Activated CD8-positive, alpha-beta T cell treated with anti-CD3 and anti-CD28 coated beads for 36 hours (primary cell): ENCODE measurements at regions of chr10 and their contacts with region 1.

Region 1: DNA sequence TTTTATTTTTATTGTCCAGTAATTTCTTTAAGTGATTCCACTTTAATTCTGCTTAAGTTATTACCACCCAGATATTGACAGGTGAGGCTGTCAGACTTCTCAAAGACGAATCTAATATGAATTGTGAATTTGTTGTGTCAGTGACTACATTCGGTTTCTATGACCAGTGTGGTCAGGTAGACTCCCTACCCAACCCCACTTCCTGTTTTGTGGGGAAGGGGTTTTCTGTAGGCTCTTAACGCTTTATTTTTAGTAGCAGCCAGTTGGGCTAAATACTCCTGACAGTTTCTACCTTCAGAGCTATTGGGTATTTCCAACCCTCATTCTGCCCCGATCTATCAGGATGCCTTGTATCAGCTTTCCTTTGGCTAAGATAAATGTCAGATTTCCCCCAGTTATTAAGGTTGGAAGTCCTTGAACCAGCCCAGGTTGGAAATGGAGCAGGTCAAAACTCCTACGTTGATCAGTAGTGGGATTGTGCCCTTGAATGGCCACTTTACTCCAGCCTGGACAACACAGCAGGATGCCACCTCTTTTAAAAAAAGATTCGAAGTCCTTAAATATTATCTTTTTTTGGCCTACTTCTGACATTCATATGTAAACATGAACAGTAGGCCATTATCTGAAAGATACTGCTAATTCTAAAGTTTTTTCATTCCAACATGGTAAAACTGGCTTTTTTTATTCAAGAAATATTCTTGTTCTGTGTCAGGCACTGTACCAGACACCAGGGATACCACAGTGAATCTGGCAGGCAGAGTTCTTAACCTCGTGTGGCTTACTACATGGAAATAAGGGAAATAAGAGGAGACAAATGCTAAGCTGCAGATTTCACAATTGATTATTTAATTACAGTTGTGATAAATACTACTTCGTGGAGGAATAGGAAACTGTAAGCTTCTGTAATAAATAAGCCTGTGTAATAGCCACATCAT is 133.3 kb upstream of the SAMD8 start:
- DNase-seq: peak; percentile 81
- ATAC-seq: peak; percentile 90
- H3K4me3 Mint-ChIP-seq: peak overlapping the region; percentile 43
- H3K27ac Mint-ChIP-seq: peak overlapping the region; percentile 79
- H3K4me1 Mint-ChIP-seq: peaks cover 56% of the 10 kb centered on the region
- H3K27me3 Mint-ChIP-seq: no peaks in the 10 kb centered on the region
- CTCF ChIP-seq: no peak

Region 2: DNA sequence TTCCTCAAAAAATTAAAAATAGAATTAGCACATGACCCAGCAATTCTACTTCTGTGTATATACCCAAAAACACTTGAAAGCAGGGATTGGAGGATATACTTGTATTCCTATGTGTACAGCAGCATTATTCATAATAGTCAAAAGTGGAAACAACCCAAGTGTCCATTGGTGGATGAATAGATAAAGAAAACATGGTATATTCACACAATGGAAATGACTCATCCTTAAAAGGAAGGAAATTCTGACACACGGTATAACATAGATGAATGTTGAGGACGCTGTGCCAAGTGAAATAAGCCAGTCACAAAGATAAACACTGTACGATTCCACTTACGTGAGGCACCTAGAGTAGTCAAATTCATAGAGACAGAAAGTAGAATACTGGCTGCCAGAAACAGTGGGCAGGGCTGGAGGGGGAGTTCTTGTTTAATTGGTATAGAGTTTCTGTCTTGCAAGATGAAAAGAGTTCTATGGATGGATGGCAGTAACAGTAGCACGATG is 178.4 kb before region 1 on chr10:
- CTCF ChIA-PET with region 1: no interaction called
- POLR2A ChIA-PET with region 1: no interaction called
- intact Hi-C with region 1: no loop called
- DNase-seq: peak; percentile 57
- ATAC-seq: peak; percentile 92
- H3K4me3 Mint-ChIP-seq: no peak overlapping the region
- H3K27ac Mint-ChIP-seq: peak overlapping the region; percentile 32
- H3K4me1 Mint-ChIP-seq: peaks cover 12% of the 10 kb centered on the region
- H3K27me3 Mint-ChIP-seq: no peaks in the 10 kb centered on the region
- CTCF ChIP-seq: no peak

Region 3: GRCh38 chr10:74826142-74827044 is 151.8 kb before region 1 on chr10 and contains the start of gene KAT6B:
- CTCF ChIA-PET with region 1: no interaction called
- POLR2A ChIA-PET with region 1: interaction called, 3 read pairs
- intact Hi-C with region 1: loop called (anchors 10 kb)
- DNase-seq: peak; percentile 100
- ATAC-seq: peak; percentile 85
- H3K4me3 Mint-ChIP-seq: peak within 1 kb of the TSS; percentile 89
- H3K27ac Mint-ChIP-seq: peak within 1 kb of the TSS; percentile 92
- H3K4me1 Mint-ChIP-seq: peaks cover 58% of the 10 kb centered on the region
- H3K27me3 Mint-ChIP-seq: no peaks in the 10 kb centered on the region
- CTCF ChIP-seq: no peak
- total RNA-seq, gene KAT6B: 22.8 to 24.8 TPM

Region 4: DNA sequence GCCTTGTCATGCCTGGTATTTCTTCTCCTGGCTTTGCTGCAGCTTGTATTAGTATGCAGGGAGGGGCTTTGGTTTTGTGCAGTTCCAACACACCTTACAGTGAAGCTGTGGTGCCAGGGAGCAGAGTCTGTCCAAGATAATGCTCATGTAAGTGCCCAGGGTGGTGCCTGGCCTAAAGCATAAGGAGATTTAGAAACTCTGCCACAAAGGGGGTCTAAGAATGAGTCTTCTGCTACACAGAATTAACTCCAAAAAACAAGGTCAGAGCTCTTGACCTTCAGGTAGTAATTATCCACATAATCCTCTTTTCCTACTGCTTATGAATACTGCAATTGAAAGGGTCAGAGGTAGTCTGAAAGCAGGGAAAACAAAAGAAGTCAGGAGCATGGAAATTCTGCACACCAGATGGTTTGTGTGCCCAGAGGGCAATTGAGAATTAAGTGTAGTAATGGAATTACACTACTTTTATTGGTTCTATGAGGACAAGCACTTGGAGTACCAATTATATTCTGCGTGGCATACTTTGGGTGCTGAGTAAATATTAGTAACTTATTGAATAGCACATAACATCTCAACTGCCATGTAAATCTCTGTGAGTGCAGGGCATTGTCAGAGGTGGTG is 30.3 kb before region 1 on chr10:
- CTCF ChIA-PET with region 1: no interaction called
- POLR2A ChIA-PET with region 1: no interaction called
- intact Hi-C with region 1: no loop called
- DNase-seq: no peak
- ATAC-seq: no peak
- H3K4me3 Mint-ChIP-seq: no peak overlapping the region
- H3K27ac Mint-ChIP-seq: no peak overlapping the region
- H3K4me1 Mint-ChIP-seq: peaks cover 33% of the 10 kb centered on the region
- H3K27me3 Mint-ChIP-seq: no peaks in the 10 kb centered on the region
- CTCF ChIP-seq: no peak

Region 5: DNA sequence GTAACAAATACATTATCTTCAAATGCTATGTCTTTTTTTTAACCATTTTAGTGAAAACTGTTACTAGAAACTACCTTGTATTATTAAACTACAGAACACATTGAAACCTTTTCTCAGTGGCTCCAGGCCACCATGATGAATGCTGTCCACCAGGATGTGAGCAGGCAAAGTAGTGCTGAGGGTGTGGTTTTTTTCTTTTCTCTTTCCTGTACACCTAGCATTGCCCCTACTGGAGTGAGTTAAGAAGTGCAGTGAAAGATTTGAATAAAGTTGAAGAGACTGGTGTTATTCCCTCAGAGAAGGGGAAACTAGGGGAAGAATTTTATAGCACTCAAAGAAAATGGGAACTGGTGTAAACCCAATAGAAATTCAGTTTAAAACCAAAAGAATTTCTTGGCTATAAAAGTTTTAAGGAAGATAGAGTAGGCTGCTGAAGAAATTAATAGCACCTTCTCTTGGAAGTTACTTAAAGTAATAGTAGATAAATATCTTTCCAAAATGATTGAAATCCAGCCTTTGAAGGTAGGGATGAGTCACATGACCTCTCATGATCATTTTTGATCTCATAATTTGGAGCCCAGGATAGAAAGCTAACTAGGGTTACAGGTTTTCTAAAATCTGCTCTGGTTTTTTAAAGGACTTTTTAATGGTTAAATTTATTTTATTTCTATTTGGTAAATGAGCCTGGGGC is 13.4 kb after region 1 on chr10:
- CTCF ChIA-PET with region 1: interaction called, 14 read pairs
- POLR2A ChIA-PET with region 1: interaction called, 6 read pairs
- intact Hi-C with region 1: no loop called
- DNase-seq: peak; percentile 19
- ATAC-seq: peak; percentile 95
- H3K4me3 Mint-ChIP-seq: no peak overlapping the region
- H3K27ac Mint-ChIP-seq: no peak overlapping the region
- H3K4me1 Mint-ChIP-seq: peaks cover 26% of the 10 kb centered on the region
- H3K27me3 Mint-ChIP-seq: no peaks in the 10 kb centered on the region
- CTCF ChIP-seq: peak; percentile 71